Naive thymus-derived CD8-positive, alpha-beta T cell (primary cell): ENCODE measurements at regions of chr5 and their contacts with region 1.

Region 1: GRCh38 chr5:140647042-140647341 is 438 bp downstream of the NDUFA2 start:
- DNase-seq: peak in 1 of 10 donors; percentile 24
- ATAC-seq: no peak
- H3K4me3 Mint-ChIP-seq: peak overlapping the region; percentile 96 to 100 (median 99)
- H3K27ac Mint-ChIP-seq: peak overlapping the region; percentile 98 to 100 (median 100)
- H3K4me1 Mint-ChIP-seq: peaks cover 21 to 68% (median 64%) of the 10 kb centered on the region in 4 donors
- H3K27me3 Mint-ChIP-seq: no peaks in the 10 kb centered on the region

Region 2: GRCh38 chr5:140547508-140548299 is 99.3 kb before region 1 on chr5 and contains the start of gene EIF4EBP3:
- POLR2A ChIA-PET with region 1: interaction called, 37 read pairs
- DNase-seq: peak; percentile 80 to 92 (median 87)
- ATAC-seq: peak; percentile 92 to 95
- H3K4me3 Mint-ChIP-seq: peak within 1 kb of the TSS; percentile 81 to 96 (median 93)
- H3K27ac Mint-ChIP-seq: peak within 1 kb of the TSS; percentile 94 to 99 (median 98)
- H3K4me1 Mint-ChIP-seq: peaks cover 13 to 36% (median 35%) of the 10 kb centered on the region in 4 donors
- H3K27me3 Mint-ChIP-seq: no peaks in the 10 kb centered on the region
- polyA plus RNA-seq, gene EIF4EBP3: 50.4 to 79.6 (median 71.5) TPM

Region 3: DNA sequence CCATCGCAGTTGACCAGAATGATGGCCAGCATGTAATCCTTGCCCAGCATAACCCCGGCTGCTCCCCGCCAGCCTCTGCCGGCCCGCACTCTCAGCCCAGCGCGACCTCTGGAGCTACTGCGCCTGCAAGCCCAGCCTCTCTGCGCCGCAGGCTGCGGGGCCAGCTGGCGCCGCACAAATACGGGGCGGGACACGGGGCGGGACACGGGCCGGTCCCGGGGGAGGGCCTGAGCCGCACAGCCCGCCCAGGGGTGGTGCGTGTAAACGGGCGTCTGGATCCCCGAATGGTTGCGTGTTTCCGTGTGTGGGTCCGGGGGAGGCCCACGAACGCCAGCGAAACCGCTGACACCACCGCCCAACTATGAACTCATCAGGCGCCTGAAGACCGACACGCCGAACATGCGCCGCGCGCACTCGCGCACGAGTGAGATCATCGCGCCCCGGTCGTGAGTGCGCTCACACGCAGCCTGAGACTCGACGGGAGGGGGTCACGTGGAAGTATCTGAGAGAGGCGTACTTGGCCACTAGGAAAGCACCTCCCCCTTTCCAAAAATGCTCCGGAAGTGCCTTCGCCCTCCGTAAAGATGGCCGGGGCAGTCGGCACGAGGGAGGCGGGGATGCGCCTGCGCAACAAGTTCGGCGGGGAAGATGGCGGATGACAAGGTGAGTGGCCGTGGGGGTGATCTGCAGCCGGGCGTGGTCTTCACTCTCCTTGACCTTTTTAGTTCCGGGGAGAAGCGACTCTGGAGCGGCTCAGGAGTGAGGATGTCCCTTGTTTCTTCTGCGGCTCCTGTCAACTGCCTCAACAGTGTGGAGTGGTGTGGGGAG is 82.6 kb before region 1 on chr5 and contains the starts of genes APBB3 and SLC35A4:
- POLR2A ChIA-PET with region 1: interaction called, 24 read pairs
- DNase-seq: peak; percentile 85 to 99 (median 98)
- ATAC-seq: peak; percentile 88
- H3K4me3 Mint-ChIP-seq: peak within 1 kb of the TSS; percentile 91 to 99 (median 96)
- H3K27ac Mint-ChIP-seq: peak within 1 kb of the TSS; percentile 96 to 99 (median 98)
- H3K4me1 Mint-ChIP-seq: peaks cover 39 to 71% (median 66%) of the 10 kb centered on the region in 4 donors
- H3K27me3 Mint-ChIP-seq: no peaks in the 10 kb centered on the region
- polyA plus RNA-seq, gene APBB3: 2.5 to 4.6 (median 3.7) TPM
- polyA plus RNA-seq, gene SLC35A4: 92.8 to 142 (median 113) TPM

Region 4: GRCh38 chr5:140664359-140665119 is 17.5 kb after region 1 on chr5 and contains the start of gene WDR55:
- POLR2A ChIA-PET with region 1: interaction called, 61 read pairs
- DNase-seq: peak; percentile 91 to 98 (median 94)
- ATAC-seq: peak; percentile 91 to 93
- H3K4me3 Mint-ChIP-seq: peak within 1 kb of the TSS; percentile 91 to 99 (median 97)
- H3K27ac Mint-ChIP-seq: peak within 1 kb of the TSS; percentile 97 to 99 (median 98)
- H3K4me1 Mint-ChIP-seq: peaks cover 24 to 47% (median 38%) of the 10 kb centered on the region in 4 donors
- H3K27me3 Mint-ChIP-seq: no peaks in the 10 kb centered on the region
- polyA plus RNA-seq, gene WDR55: 9.2 to 15.6 (median 9.6) TPM

Region 5: DNA sequence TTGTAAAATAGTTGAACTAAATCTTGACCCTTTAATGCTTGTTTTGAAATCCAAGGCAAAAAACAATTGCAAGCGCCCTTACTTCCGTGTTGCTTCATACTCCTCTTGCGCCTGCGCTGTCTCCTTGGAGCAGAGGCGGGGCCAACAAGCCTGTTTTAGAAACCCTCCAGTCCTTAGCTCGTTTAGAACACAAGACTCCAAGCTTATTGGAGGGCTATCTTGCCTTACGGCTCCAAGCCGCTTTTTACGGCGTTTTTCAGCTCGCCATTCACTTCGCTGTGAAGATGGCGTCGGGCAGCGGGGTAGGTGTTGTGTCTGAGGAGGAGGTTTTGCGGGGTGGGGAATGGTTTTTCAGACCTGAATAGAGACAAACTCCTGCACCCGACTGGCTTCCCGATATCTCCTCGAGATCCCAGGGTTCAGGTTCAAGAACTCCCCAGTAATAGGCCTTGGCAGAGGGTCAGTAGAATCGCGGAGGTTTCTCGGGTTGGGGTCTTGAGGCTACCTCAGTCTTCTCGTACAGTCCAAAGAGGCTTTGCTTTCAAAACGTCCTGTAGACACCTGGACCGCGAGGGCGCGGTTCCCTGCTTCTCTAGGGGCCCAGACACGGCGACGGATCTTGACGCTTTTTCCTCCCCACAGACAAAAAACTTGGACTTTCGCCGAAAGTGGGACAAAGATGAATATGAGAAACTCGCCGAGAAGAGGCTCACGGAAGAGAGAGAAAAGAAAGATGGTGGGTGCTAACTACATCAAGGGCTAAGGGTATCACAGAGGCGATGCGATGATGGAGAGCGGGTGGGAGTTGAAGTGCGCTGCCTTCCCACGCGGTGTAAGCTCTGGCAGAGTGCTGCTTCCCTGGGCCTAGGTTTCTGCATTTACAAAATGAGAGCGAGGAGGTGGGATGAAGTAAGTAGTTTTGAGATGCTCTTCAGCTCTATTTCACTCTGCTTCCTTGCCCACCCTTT is 53.5 kb after region 1 on chr5 and contains the start of gene ZMAT2:
- POLR2A ChIA-PET with region 1: interaction called, 12 read pairs
- DNase-seq: peak; percentile 79 to 97 (median 92)
- ATAC-seq: peak; percentile 97 to 98
- H3K4me3 Mint-ChIP-seq: peak within 1 kb of the TSS; percentile 91 to 100 (median 98)
- H3K27ac Mint-ChIP-seq: peak within 1 kb of the TSS; percentile 93 to 99 (median 98)
- H3K4me1 Mint-ChIP-seq: peaks cover 23 to 33% (median 31%) of the 10 kb centered on the region in 4 donors
- H3K27me3 Mint-ChIP-seq: no peaks in the 10 kb centered on the region
- polyA plus RNA-seq, gene ZMAT2: 64.2 to 81.3 (median 77.0) TPM

Region 6: GRCh38 chr5:140855772-140856674 is 209.0 kb after region 1 on chr5 and contains the start of gene PCDHA10:
- POLR2A ChIA-PET with region 1: no interaction called
- DNase-seq: no peak
- ATAC-seq: no peak
- H3K4me3 Mint-ChIP-seq: no peak within 1 kb of the TSS
- H3K27ac Mint-ChIP-seq: no peak within 1 kb of the TSS
- H3K4me1 Mint-ChIP-seq: no peaks in the 10 kb centered on the region
- H3K27me3 Mint-ChIP-seq: peaks cover 4 to 47% (median 21%) of the 10 kb centered on the region in 5 donors
- polyA plus RNA-seq, gene PCDHA10: not detected